ENCODE measurements at regions of chr7 and their contacts with region 1.

Region 1: GRCh38 chr7:115851291-115851690 is 179.3 kb downstream of the TFEC start:
- DNase-seq: peak in 1 of 2 experiments; percentile 61
- ATAC-seq: peak in 1 of 2 experiments; percentile 48; a peak in 2 of 6 replicates
- H3K4me3 ChIP-seq: no peak overlapping the region
- H3K27ac ChIP-seq: no peak overlapping the region
- H3K4me1 ChIP-seq: no peaks in the 10 kb centered on the region
- CTCF ChIP-seq: peak; percentile 63
- EP300 ChIP-seq: no peak
- POLR2A ChIP-seq: no peak
- RAD21 ChIP-seq: peak; percentile 74 to 76

Region 2: GRCh38 chr7:114081606-114082425 is 1769.5 kb before region 1 on chr7:
- CTCF ChIA-PET with region 1: interaction called, 19 read pairs
- POLR2A ChIA-PET with region 1: no interaction called
- DNase-seq: peak; percentile 26 to 54
- ATAC-seq: no peak
- H3K4me3 ChIP-seq: no peak overlapping the region; the same call in 2 of the 3 replicates
- H3K27ac ChIP-seq: no peak overlapping the region
- H3K4me1 ChIP-seq: peaks cover 32% of the 10 kb centered on the region
- CTCF ChIP-seq: peak; percentile 65
- EP300 ChIP-seq: no peak
- POLR2A ChIP-seq: no peak
- RAD21 ChIP-seq: peak; percentile 79